Transverse colon (tissue), 4 donors: ENCODE measurements at regions of chr4 and their contacts with region 1.

Region 1: GRCh38 chr4:79748835-79749234 is 324.2 kb downstream of the ANTXR2 start:
- DNase-seq: no peak
- H3K4me3 ChIP-seq: no peak overlapping the region
- H3K27ac ChIP-seq: no peak overlapping the region
- H3K4me1 ChIP-seq: no peaks in the 10 kb centered on the region
- H3K27me3 ChIP-seq: no peaks in the 10 kb centered on the region
- CTCF ChIP-seq: no peak
- EP300 ChIP-seq: no peak
- POLR2A ChIP-seq: no peak

Region 2: DNA sequence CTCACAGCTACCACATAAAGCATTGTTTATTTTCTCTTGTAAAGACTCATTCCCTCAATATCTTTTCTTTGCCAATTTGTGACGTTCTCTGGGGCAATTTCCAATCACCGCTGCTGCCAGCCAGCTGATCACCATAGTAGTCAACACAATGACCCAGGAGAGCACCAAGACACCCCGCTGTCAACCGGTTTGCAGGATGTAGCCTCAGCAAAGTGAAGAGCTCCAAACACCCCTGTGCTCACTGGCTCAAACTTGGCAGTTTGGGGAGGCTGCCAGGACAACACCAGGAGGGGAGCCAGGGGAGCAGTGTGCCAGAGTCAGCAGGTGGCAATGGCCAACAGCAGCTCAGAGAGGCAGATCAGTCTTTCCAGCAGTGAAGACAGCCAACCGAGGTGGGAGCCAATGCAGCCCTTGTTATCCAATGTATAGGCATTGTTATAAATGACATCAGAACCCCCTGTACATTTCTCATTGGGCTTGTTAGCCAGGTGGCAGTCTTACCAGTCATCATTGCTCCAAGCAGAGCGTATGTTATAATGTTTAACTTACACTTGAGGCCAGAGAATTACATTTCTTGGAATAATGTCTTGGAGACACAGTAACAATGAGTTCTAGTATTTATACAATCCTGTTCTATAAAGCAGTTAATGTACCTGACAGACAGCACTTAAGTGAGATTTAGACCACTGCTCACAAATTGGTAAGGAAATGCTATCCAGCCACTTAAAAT is 65.9 kb before region 1 on chr4:
- in situ Hi-C with region 1: loop called in 1 of 4 experiments (anchors 10 kb)
- intact Hi-C with region 1: no loop called
- DNase-seq: no peak
- H3K4me3 ChIP-seq: no peak overlapping the region
- H3K27ac ChIP-seq: no peak overlapping the region
- H3K4me1 ChIP-seq: no peaks in the 10 kb centered on the region
- H3K27me3 ChIP-seq: no peaks in the 10 kb centered on the region
- CTCF ChIP-seq: no peak
- EP300 ChIP-seq: no peak
- POLR2A ChIP-seq: no peak